ENCODE measurements at regions of chr12 and their contacts with region 1.

Region 1: DNA sequence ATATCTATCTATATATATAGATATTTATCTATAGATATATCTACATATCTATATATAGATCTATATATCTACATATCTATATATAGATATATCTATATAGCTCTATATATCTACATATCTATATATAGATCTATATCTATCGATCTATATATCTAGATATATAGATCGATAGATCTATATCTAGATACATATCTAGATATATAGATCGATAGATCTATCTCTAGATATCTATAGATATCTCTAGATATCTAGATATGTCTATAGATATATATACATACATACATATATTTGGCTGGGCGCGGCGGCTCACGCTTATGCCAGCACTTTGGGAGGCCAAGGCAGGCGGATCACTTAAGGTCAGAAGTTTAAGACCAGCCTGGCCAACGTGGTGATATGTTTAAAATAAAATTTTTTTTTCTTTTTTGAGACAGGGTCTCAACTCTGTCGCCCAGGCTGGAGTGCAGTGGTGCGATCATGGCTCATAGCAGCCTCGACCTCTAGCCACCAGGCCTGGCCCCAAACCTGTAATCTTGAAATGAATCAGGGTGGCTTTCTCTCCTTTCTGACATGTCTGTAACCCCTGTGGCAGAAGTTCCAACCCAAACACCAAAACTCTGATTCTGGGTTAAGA is 18.1 kb downstream of the ARPC3 start:
- DNase-seq: no peak
- H3K4me3 ChIP-seq: peak overlapping the region; percentile 57
- H3K27ac ChIP-seq: no peak overlapping the region
- H3K4me1 ChIP-seq: no peaks in the 10 kb centered on the region
- H3K27me3 ChIP-seq: no peaks in the 10 kb centered on the region
- CTCF ChIP-seq: no peak

Region 2: GRCh38 chr12:110100315-110100970 is 331.6 kb before region 1 on chr12:
- CTCF ChIA-PET with region 1: interaction called, 13 read pairs
- POLR2A ChIA-PET with region 1: no interaction called
- intact Hi-C with region 1: loop called (anchors 1 kb)
- DNase-seq: peak; percentile 87
- H3K4me3 ChIP-seq: no peak overlapping the region
- H3K27ac ChIP-seq: no peak overlapping the region
- H3K4me1 ChIP-seq: peaks cover 10% of the 10 kb centered on the region
- H3K27me3 ChIP-seq: no peaks in the 10 kb centered on the region
- CTCF ChIP-seq: peak; percentile 94

Region 3: DNA sequence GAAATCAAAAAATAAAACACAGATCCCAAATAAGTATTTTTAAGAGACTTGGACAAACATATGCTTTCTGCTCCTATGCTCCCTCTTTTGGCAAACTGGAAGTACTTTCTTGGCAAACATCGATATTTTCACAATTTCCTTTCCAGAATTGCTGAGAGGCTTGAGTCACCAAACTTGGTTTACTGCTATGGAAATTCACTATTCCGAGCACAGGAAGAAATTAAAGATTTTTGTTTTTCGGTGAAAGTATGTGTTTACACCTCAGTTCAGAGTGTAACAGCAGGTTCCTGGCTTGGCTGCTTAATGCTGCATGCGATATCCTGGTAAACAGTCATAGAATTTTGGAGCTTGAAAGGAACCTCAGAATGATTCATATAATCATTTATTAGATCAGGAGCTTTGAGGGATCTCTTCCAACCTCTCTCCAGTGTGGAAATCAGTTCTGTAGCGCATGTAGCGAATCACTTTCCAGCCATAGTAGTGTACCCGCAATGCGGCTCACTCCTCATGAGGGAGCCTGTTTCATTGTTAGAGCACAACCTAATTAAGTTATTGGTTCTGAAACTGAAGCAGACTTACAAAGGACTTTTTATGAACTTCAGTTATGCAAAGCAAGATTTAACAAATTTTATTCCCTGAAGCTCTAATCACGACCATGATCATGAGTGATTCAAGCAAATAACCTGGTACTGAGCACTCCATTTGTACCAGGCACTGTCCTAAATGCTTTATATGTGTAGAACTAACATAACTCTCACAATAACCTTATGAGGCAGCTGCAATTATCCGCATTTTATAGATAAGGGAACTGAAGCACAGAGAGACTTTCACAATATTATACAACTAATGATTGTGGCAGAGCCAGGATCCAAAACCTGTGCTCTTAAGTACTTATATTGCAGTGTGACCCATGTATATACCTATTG is 207.4 kb before region 1 on chr12:
- CTCF ChIA-PET with region 1: interaction called, 4 read pairs
- POLR2A ChIA-PET with region 1: interaction called, 10 read pairs
- intact Hi-C with region 1: no loop called
- DNase-seq: peak; percentile 81
- H3K4me3 ChIP-seq: peak overlapping the region; percentile 13
- H3K27ac ChIP-seq: peak overlapping the region; percentile 62
- H3K4me1 ChIP-seq: peaks cover 31% of the 10 kb centered on the region
- H3K27me3 ChIP-seq: no peaks in the 10 kb centered on the region
- CTCF ChIP-seq: peak; percentile 66

Region 4: GRCh38 chr12:110421159-110421661 is 10.9 kb before region 1 on chr12:
- CTCF ChIA-PET with region 1: interaction called, 16 read pairs
- POLR2A ChIA-PET with region 1: no interaction called
- intact Hi-C with region 1: no loop called
- DNase-seq: no peak
- H3K4me3 ChIP-seq: no peak overlapping the region
- H3K27ac ChIP-seq: no peak overlapping the region
- H3K4me1 ChIP-seq: no peaks in the 10 kb centered on the region
- H3K27me3 ChIP-seq: no peaks in the 10 kb centered on the region
- CTCF ChIP-seq: no peak

Region 5: GRCh38 chr12:110449799-110450497 is 17.9 kb after region 1 on chr12 and contains the start of gene ARPC3:
- CTCF ChIA-PET with region 1: interaction called, 13 read pairs
- POLR2A ChIA-PET with region 1: no interaction called
- intact Hi-C with region 1: no loop called
- DNase-seq: peak; percentile 97
- H3K4me3 ChIP-seq: peak within 1 kb of the TSS; percentile 100
- H3K27ac ChIP-seq: peak within 1 kb of the TSS; percentile 89
- H3K4me1 ChIP-seq: no peaks in the 10 kb centered on the region
- H3K27me3 ChIP-seq: no peaks in the 10 kb centered on the region
- CTCF ChIP-seq: peak; percentile 93
- total RNA-seq, gene ARPC3: 234 and 235 TPM in 2 replicates

Region 6: GRCh38 chr12:110543252-110543959 is 111.3 kb after region 1 on chr12:
- CTCF ChIA-PET with region 1: no interaction called
- POLR2A ChIA-PET with region 1: no interaction called
- intact Hi-C with region 1: no loop called
- DNase-seq: peak; percentile 93
- H3K4me3 ChIP-seq: no peak overlapping the region
- H3K27ac ChIP-seq: peak overlapping the region; percentile 74
- H3K4me1 ChIP-seq: peaks cover 50% of the 10 kb centered on the region
- H3K27me3 ChIP-seq: no peaks in the 10 kb centered on the region
- CTCF ChIP-seq: no peak